ENCODE measurements at regions of chr5 and their contacts with region 1.

Region 1: DNA sequence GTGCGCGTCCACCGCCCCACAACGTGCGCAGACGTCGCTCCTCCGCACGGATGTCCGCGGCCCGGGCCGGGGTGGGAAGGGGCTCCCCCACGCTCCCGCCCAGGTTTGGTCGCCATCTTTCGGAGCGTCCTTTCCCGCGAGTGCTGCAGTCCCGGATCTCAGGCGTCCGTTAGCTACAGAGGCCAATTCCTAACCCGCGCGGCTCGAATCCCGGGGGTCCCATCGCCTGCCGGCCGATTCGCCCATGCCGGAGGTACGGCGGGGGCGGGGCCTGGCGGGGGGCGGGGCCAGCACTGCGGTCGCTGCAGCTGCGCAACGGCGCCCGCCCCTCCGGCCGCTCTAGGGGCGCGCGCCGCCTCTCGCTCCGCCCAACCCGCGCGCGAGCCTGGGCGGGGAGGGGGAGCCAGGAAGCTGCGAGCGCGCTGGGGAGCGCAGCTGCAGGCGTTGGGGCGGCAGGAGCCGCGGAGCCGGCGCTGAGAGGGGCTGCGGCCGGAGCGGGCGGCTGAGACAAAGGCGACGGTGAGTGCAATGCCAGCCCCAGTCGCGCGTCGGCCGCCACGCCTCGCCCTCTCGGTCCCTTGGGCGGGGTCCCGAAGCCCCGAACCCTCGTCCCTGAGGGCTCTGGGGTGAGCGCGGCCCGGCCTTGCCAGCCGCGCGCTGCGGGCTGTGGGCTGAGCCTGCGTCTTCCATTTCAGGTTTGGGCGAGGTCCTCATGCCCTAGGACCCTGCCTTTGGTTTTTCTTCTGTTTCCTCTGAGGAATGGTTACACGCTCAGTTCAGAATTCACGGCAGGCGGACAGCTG is at the start of gene CDC42SE2:
- DNase-seq: peak; percentile 84 to 93 (median 90)
- H3K4me3 ChIP-seq: peak within 1 kb of the TSS; percentile 97 to 99
- H3K4me3 Mint-ChIP-seq: peak within 1 kb of the TSS; percentile 91 to 95 (median 94)
- H3K27ac ChIP-seq: peak within 1 kb of the TSS; percentile 96
- H3K27ac Mint-ChIP-seq: peak within 1 kb of the TSS; percentile 92 to 98 (median 97)
- H3K4me1 ChIP-seq: peaks cover 63% of the 10 kb centered on the region
- H3K4me1 Mint-ChIP-seq: peaks cover 23 to 63% (median 43%) of the 10 kb centered on the region in 4 donors
- H3K27me3 ChIP-seq: no peaks in the 10 kb centered on the region
- H3K27me3 Mint-ChIP-seq: no peaks in the 10 kb centered on the region
- total RNA-seq, gene CDC42SE2: 298 to 316 TPM

Region 2: GRCh38 chr5:131209506-131210150 is 54.2 kb before region 1 on chr5:
- CTCF ChIA-PET with region 1: interaction called, 10 read pairs
- POLR2A ChIA-PET with region 1: interaction called, 40 read pairs
- intact Hi-C with region 1: no loop called
- DNase-seq: peak; percentile 78 to 87 (median 81)
- H3K4me3 ChIP-seq: peak overlapping the region in 1 of 2 donors; percentile 16
- H3K4me3 Mint-ChIP-seq: peak overlapping the region; percentile 58 to 89 (median 84)
- H3K27ac ChIP-seq: peak overlapping the region; percentile 75
- H3K27ac Mint-ChIP-seq: peak overlapping the region; percentile 91 to 99 (median 98)
- H3K4me1 ChIP-seq: peaks cover 57% of the 10 kb centered on the region
- H3K4me1 Mint-ChIP-seq: peaks cover 39 to 59% (median 50%) of the 10 kb centered on the region in 4 donors
- H3K27me3 ChIP-seq: no peaks in the 10 kb centered on the region
- H3K27me3 Mint-ChIP-seq: no peaks in the 10 kb centered on the region

Region 3: DNA sequence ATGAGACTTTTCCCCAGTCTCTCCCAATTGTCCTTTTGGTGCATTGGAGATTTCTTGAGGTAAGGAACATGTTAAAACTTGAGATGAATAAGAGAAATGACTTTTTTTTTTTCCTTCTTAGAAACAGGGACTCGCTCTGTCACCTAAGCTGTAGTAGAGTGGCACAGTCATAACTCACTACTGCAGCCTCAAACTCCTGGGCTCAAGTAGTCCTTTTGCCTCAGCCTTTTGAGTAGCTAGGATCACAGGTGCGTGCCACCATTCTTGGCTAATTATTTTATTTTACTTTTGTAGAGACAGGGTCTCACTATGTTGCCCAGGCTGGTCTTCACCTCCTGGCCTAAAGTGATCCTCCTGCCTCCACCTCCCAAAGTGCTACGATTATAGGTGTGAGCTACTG is 25.9 kb after region 1 on chr5:
- CTCF ChIA-PET with region 1: interaction called, 18 read pairs
- POLR2A ChIA-PET with region 1: interaction called, 1,078 read pairs
- intact Hi-C with region 1: no loop called
- DNase-seq: peak in 1 of 5 donors; percentile 52
- H3K4me3 ChIP-seq: peak overlapping the region in 1 of 2 donors; percentile 23
- H3K4me3 Mint-ChIP-seq: peak overlapping the region; percentile 81 to 88 (median 86)
- H3K27ac ChIP-seq: peak overlapping the region; percentile 56
- H3K27ac Mint-ChIP-seq: peak overlapping the region; percentile 86 to 98 (median 94)
- H3K4me1 ChIP-seq: peaks cover 90% of the 10 kb centered on the region
- H3K4me1 Mint-ChIP-seq: peaks cover 41 to 82% (median 60%) of the 10 kb centered on the region in 4 donors
- H3K27me3 ChIP-seq: no peaks in the 10 kb centered on the region
- H3K27me3 Mint-ChIP-seq: no peaks in the 10 kb centered on the region

Region 4: DNA sequence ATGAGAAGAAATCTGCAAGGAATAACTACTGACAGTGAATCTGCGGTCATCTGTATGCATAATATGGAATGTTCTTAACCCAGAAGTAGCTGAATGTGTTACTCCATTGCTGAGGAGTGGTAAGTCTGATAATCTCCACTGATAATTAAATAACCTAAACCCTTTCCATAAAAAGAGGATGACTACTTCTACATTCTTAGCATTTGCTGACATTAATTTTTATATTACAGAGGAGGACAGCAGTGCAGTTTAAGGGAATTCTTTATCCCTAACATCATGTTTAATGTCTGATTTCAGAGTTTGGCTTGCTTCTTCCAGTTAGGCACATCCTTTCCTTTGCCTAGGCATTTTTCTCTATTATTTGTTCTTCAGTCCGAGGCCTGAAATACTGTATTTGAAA is 52.2 kb after region 1 on chr5:
- CTCF ChIA-PET with region 1: interaction called, 3 read pairs
- POLR2A ChIA-PET with region 1: interaction called, 47 read pairs
- intact Hi-C with region 1: loop called (anchors 2 kb)
- DNase-seq: no peak
- H3K4me3 ChIP-seq: no peak overlapping the region
- H3K4me3 Mint-ChIP-seq: peak overlapping the region in 3 of 8 donors; percentile 9 to 44 (median 11)
- H3K27ac ChIP-seq: no peak overlapping the region
- H3K27ac Mint-ChIP-seq: peak overlapping the region; percentile 3 to 94 (median 32)
- H3K4me1 ChIP-seq: peaks cover 77% of the 10 kb centered on the region
- H3K4me1 Mint-ChIP-seq: peaks cover 58 to 88% (median 73%) of the 10 kb centered on the region in 4 donors
- H3K27me3 ChIP-seq: no peaks in the 10 kb centered on the region
- H3K27me3 Mint-ChIP-seq: no peaks in the 10 kb centered on the region

Region 5: DNA sequence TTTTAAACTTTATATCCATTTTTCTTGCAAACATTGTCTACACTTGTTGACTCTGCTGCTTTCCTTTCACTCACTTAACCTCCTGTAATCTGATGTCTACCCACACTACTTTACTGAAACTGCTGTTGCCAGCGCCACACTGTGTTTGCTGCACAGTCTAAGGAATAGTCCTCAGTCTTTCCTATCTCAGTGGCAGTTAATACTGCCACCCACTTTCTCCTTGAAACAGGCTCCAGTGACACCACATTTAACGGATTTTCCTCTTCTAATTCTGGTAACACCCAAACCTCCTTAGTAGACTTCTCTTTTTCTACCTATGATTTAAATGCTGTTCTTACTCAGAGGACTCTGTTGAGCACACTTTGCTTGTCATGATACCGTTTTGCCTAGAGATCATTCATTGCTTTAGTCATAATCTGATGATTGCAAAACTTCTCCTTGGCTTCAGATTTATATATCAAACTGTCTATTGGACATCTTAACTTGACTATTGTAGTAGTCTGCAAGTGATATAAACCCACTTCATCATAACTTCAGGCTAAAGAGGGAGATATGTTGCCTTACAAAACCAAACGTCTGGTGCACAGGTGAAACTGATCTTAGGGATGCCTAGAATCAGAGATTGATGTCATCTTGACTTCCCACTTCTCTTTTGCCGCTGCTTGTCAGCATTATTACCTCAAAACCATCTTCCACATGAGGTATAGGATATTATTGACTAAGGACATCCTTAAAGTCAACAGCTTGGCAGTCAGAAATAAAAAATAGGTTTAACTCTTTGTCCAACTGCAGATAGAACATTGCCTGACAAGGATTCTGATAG is 94.1 kb after region 1 on chr5:
- CTCF ChIA-PET with region 1: interaction called, 17 read pairs
- POLR2A ChIA-PET with region 1: interaction called, 53 read pairs
- intact Hi-C with region 1: loop called (anchors 1 kb)
- DNase-seq: peak in 2 of 5 donors; percentile 39 to 44
- H3K4me3 ChIP-seq: no peak overlapping the region
- H3K4me3 Mint-ChIP-seq: peak overlapping the region; percentile 6 to 70 (median 63)
- H3K27ac ChIP-seq: peak overlapping the region; percentile 45
- H3K27ac Mint-ChIP-seq: peak overlapping the region; percentile 66 to 92 (median 90)
- H3K4me1 ChIP-seq: peaks cover 85% of the 10 kb centered on the region
- H3K4me1 Mint-ChIP-seq: peaks cover 49 to 76% (median 66%) of the 10 kb centered on the region in 4 donors
- H3K27me3 ChIP-seq: no peaks in the 10 kb centered on the region
- H3K27me3 Mint-ChIP-seq: no peaks in the 10 kb centered on the region

Region 6: DNA sequence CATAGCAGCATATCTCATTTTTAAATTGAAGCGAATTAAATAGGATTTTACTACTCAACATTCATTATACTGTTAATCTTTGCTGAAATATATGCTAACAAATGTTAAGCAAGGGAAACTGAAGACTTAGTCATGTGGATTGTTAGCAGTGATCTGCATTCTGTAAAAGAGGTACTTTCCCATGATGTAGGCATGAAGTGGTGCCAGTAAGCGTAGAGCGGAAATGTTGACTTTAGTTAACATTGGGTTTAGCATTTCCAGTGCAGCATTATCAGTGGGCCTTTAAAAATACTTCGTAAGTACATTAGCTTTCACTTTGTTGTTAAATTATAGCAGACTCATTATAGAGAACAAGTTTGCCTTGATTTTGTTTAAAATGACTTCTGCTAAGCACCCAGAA is 130.3 kb after region 1 on chr5:
- CTCF ChIA-PET with region 1: interaction called, 3 read pairs
- POLR2A ChIA-PET with region 1: interaction called, 552 read pairs
- intact Hi-C with region 1: no loop called
- DNase-seq: peak; percentile 75 to 88 (median 83)
- H3K4me3 ChIP-seq: no peak overlapping the region
- H3K4me3 Mint-ChIP-seq: peak overlapping the region; percentile 41 to 79 (median 73)
- H3K27ac ChIP-seq: peak overlapping the region; percentile 85
- H3K27ac Mint-ChIP-seq: peak overlapping the region; percentile 95 to 99 (median 97)
- H3K4me1 ChIP-seq: peaks cover 77% of the 10 kb centered on the region
- H3K4me1 Mint-ChIP-seq: peaks cover 67 to 93% (median 80%) of the 10 kb centered on the region in 4 donors
- H3K27me3 ChIP-seq: no peaks in the 10 kb centered on the region
- H3K27me3 Mint-ChIP-seq: no peaks in the 10 kb centered on the region

Measured in CD4-positive, alpha-beta memory T cell (primary cell).